ENCODE measurements at regions of chr9 and their contacts with region 1.

Region 1: GRCh38 chr9:122099271-122099869 is 6.3 kb upstream of the TTLL11 start:
- DNase-seq: peak; percentile 32
- H3K4me3 ChIP-seq: no peak overlapping the region
- H3K27ac ChIP-seq: no peak overlapping the region
- H3K27me3 ChIP-seq: peaks cover 2% of the 10 kb centered on the region
- CTCF ChIP-seq: peak; percentile 84

Region 2: DNA sequence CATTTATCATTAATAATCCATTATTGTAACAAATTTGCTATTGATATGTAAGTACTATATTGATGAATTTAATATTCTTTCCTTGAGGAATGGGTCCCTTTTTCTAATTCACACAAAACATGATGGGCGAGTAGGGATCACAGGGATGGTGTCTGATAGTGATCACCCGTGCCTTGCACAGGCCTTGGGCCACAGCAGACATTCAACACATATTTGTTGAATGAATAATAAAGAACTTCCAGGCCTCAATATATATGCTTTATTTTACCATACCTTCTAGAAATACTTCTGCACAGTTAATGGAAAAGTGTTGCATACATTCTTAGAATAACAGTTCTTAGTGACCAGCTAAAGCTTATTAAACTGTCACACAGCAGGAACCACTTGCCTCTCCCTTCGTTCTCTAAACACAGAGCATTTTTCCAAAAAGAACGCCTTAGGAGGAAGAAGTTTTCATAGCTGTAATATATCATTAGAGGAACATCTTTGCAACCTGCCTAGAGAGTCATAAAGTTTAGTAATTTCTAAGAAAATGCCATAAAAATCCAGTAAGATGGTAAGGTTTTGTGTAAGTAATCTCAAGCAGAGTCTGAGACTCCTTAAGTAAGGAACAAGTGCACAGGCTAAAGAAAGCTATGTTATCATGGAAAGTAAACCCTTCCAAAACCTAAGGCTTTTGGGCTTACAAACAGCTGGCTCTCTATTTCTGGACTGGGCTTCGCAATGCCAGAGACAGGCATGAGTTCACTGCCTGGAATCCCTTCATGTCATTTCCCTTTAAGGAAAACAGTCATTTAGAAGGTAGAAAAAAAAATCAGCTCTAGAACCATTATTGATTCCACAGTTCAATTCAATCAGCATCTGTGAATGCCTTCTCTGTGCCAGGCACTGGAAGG is 24.0 kb before region 1 on chr9:
- CTCF ChIA-PET with region 1: interaction called, 17 read pairs
- POLR2A ChIA-PET with region 1: no interaction called
- DNase-seq: no peak
- H3K4me3 ChIP-seq: no peak overlapping the region
- H3K27ac ChIP-seq: peak overlapping the region; percentile 31
- H3K27me3 ChIP-seq: no peaks in the 10 kb centered on the region
- CTCF ChIP-seq: no peak

Region 3: DNA sequence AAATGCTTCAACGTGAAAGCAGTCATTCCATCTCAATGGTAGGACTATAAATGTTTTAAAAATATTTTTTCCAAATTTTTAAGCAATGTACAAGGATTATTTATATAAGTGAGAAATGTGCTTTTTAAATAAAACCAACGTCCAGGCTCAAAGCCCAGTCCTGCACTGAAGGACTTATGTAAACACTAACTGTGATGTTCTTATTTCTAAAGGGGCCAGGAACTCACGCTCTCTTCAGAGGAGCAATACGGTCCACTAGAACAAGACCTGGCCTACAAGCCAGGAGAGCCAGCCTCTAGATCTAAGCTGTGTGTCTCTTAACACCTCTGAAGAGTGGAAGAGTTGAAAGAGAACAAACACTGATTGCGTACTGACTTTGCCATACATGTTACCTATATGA is 18.4 kb before region 1 on chr9:
- CTCF ChIA-PET with region 1: interaction called, 17 read pairs
- POLR2A ChIA-PET with region 1: no interaction called
- DNase-seq: peak; percentile 61
- H3K4me3 ChIP-seq: no peak overlapping the region
- H3K27ac ChIP-seq: no peak overlapping the region
- H3K27me3 ChIP-seq: no peaks in the 10 kb centered on the region
- CTCF ChIP-seq: no peak

Region 4: DNA sequence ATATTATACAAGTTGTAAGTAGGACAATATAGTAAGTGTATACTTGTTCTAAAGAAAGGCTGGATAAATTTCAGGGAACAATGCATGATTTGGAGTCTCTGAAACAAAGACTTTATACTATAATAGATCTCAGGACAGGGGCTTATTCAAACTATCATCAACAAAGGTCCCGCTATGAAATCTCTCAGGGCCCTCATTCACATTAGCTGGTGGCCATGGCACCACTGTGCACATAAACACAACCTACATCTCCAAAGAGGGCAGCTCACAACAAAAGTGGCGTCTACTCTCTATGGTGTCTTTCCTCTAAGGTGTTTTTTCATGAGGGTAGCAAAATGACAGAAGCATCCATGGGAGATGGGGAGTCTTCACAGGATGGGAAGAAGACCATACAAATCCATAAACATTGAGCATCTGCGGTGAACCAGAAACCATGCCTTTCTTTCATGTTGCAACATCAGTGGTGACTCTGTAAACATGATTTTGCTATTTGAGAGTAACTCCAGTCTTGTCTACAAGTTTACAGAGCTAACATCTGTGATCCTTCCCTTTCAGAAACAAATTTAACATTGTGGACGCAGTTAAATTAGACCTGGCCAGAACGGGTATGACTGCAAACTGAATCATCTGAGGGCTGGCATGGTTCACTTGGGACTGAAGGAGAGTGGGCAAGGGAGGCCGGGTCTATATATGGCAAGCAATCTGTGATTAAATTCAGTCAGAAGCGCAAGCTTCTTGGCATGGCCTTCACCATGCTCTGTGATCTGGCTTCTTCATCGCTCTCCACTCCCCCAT is 11.8 kb before region 1 on chr9:
- CTCF ChIA-PET with region 1: interaction called, 32 read pairs
- POLR2A ChIA-PET with region 1: no interaction called
- DNase-seq: peak; percentile 37
- H3K4me3 ChIP-seq: no peak overlapping the region
- H3K27ac ChIP-seq: peak overlapping the region; percentile 62
- H3K27me3 ChIP-seq: no peaks in the 10 kb centered on the region
- CTCF ChIP-seq: no peak

Region 5: GRCh38 chr9:122116040-122116439 is 16.7 kb after region 1 on chr9:
- CTCF ChIA-PET with region 1: interaction called, 378 read pairs
- POLR2A ChIA-PET with region 1: no interaction called
- DNase-seq: no peak
- H3K4me3 ChIP-seq: no peak overlapping the region
- H3K27ac ChIP-seq: no peak overlapping the region
- H3K27me3 ChIP-seq: peaks cover 25% of the 10 kb centered on the region
- CTCF ChIP-seq: no peak

Region 6: GRCh38 chr9:122125158-122125508 is 25.8 kb after region 1 on chr9:
- CTCF ChIA-PET with region 1: interaction called, 378 read pairs
- POLR2A ChIA-PET with region 1: interaction called, 4 read pairs
- DNase-seq: peak; percentile 47
- H3K4me3 ChIP-seq: no peak overlapping the region
- H3K27ac ChIP-seq: no peak overlapping the region
- H3K27me3 ChIP-seq: peaks cover 2% of the 10 kb centered on the region
- CTCF ChIP-seq: peak; percentile 97

Region 7: DNA sequence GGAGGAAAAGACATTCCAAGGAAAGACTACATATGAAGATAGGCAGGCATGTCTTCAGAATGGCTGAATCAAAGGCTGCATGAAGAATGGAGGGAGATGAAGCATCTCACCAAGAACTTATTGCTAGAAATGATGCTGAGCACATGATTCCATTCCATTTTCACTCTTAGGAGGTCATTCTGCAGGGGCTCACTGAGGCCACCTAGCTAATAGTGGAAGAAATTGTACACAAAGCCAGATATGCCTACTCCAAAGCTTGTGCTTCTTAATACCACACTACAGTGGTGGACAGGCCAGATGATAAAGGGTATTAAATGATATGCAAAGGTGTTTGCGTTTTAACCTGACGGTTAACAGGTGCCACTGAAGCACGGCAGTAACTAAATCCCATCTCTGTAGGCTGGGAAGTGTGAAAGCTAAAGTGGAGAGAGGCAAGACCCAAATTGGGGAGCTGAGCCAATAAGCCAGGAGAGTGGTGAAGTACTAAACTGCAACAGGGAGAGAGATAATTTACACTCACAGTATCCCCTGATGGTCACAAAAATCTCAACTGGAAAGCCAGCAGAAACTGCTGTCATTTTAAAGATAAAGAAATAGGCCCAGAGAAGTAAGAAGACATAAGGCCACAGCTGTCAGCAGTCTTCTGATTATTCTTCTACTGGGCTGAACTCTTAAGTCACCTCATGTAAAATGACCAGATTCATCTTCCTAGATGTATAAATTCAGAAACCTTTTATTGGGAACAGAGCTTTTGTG is 45.6 kb after region 1 on chr9:
- CTCF ChIA-PET with region 1: interaction called, 15 read pairs
- POLR2A ChIA-PET with region 1: no interaction called
- DNase-seq: no peak
- H3K4me3 ChIP-seq: no peak overlapping the region
- H3K27ac ChIP-seq: no peak overlapping the region
- H3K27me3 ChIP-seq: no peaks in the 10 kb centered on the region
- CTCF ChIP-seq: peak; percentile 45

Region 8: GRCh38 chr9:123201083-123201482 is 1101.7 kb after region 1 on chr9:
- CTCF ChIA-PET with region 1: no interaction called
- POLR2A ChIA-PET with region 1: no interaction called
- DNase-seq: no peak
- H3K4me3 ChIP-seq: no peak overlapping the region
- H3K27ac ChIP-seq: no peak overlapping the region
- H3K27me3 ChIP-seq: peaks cover 2% of the 10 kb centered on the region
- CTCF ChIP-seq: no peak